ENCODE measurements at regions of chr19 and their contacts with region 1.

Region 1: DNA sequence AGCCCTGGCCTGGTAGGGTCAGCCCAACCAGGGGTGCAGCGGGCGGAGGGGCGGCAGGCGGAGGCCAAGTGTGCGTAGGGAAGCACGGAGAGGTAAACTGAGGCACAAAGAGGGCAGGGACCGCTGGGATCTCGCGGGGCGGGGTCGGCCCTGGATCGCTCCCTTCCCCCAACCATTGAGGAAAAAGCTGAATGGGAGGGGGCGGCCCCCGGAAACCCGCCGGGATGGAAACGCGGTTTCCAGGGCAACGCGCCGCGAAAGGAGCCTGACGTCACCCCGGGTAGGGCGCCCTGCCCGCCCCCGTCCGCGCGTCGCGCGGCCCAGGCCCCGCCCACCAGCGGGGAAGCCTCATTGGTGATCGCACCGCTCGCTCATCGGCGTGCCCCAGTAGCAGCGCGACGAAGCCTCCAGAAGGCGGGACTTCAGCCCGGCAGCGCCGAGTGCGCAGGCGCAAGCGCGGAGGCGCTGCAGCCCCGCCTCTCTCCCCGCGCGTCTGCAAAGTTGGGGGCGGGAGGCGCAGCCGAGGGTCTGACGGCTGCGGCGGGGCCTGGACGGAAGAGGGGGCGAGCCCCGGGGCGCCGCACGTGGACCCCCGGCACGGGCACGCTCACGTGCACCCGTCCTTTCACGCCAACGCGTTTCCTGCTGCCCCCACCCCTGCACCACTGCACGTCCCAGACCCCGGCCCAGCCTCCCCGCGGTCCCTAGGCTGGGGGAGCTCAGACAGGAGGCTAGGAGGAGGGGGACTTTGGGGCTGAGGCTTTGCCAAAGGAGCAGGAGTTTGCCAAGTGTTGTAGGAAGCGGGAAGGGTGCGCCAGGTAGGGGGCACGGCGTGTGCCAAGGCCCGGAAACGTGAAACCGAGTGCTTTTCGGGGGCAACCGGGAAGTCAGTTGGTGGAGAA is 8.2 kb upstream of the CIRBP start:
- DNase-seq: peak; percentile 96
- H3K4me3 Mint-ChIP-seq: peak overlapping the region; percentile 71
- H3K27ac Mint-ChIP-seq: peak overlapping the region; percentile 94
- H3K4me1 Mint-ChIP-seq: peaks cover 38% of the 10 kb centered on the region
- H3K27me3 Mint-ChIP-seq: no peaks in the 10 kb centered on the region
- CTCF ChIP-seq: no peak

Region 2: DNA sequence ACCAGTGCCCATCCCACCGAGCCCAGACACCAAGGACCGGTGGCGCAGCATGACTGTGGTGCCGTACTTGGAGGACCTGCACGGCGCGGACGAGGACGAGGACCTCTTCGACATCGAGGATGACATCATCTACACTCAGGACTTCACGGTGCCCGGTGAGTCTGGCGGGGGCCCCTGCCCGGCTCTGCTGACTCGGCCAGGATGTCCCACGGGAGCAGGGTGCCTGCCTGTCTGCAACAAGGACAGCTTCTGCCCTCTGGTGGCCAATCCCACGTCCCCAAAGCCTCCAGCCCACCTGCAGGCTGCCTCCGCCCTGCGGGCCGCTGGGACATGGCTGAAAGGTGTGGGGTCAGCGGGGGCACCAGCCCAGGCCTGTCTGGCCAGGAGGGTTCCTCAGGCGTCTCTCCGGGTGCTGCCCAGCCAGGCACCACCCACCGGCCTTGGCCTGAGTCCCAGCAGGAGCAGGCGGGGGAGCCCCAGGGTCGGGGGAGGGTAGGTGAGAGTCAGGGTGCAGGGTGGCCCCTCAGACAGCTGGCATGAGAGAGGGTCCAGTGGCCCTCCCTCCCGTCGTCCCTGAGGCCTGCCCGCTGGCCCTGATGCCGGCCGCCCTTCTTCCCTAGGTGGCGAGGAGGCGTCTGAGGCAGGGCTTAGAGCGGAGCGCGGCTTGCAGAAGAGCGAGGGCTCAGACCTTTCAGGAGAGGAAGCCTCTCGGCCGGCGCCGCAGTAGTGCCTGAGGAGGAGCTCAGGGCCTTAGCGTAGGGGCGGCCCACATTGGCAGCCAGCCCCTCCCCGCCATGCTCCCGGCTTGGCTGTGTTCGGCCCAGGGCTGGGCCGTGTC is 37.6 kb before region 1 on chr19:
- CTCF ChIA-PET with region 1: no interaction called
- POLR2A ChIA-PET with region 1: no interaction called
- intact Hi-C with region 1: no loop called
- DNase-seq: no peak
- H3K4me3 Mint-ChIP-seq: no peak overlapping the region
- H3K27ac Mint-ChIP-seq: no peak overlapping the region
- H3K4me1 Mint-ChIP-seq: no peaks in the 10 kb centered on the region
- H3K27me3 Mint-ChIP-seq: no peaks in the 10 kb centered on the region
- CTCF ChIP-seq: peak; percentile 39

Region 3: DNA sequence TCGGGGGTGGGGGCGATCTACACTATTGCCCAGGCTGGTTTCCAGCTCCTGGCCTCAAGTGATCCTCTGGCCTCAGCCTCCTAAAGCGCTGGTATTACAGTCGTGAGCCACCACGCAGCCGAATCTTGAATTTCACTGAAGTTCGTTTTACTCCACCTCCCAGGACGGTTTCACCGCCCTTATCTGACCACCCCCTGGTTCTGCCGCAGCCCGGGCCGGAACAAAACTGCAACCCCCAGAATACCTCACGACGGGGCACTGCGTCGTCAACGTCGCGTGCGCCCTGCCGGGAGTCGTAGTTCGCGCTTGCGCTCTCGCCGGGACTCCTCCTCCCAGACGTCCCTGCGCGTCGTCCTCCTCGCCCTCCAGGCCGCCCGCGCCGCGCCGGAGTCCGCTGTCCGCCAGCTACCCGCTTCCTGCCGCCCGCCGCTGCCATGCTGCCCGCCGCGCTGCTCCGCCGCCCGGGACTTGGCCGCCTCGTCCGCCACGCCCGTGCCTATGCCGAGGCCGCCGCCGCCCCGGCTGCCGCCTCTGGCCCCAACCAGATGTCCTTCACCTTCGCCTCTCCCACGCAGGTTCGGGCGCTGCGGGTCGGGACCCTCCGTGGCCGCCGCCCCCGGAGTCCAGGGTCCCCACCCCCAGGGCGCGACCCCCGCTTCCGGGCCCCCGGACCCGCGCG is 19.3 kb before region 1 on chr19 and contains the start of gene ATP5F1D:
- CTCF ChIA-PET with region 1: interaction called, 144 read pairs
- POLR2A ChIA-PET with region 1: interaction called, 240 read pairs
- intact Hi-C with region 1: loop called (anchors 1 kb)
- DNase-seq: peak; percentile 93
- H3K4me3 Mint-ChIP-seq: peak within 1 kb of the TSS; percentile 71
- H3K27ac Mint-ChIP-seq: peak within 1 kb of the TSS; percentile 75
- H3K4me1 Mint-ChIP-seq: peaks cover 10% of the 10 kb centered on the region
- H3K27me3 Mint-ChIP-seq: no peaks in the 10 kb centered on the region
- CTCF ChIP-seq: no peak
- total RNA-seq, gene ATP5F1D: 256 and 258 TPM in 2 replicates

Region 4: GRCh38 chr19:1249298-1249989 is 11.4 kb before region 1 on chr19:
- CTCF ChIA-PET with region 1: interaction called, 144 read pairs
- POLR2A ChIA-PET with region 1: interaction called, 240 read pairs
- intact Hi-C with region 1: loop called (anchors 1 kb)
- DNase-seq: peak; percentile 97
- H3K4me3 Mint-ChIP-seq: peak overlapping the region; percentile 86
- H3K27ac Mint-ChIP-seq: no peak overlapping the region
- H3K4me1 Mint-ChIP-seq: peaks cover 9% of the 10 kb centered on the region
- H3K27me3 Mint-ChIP-seq: no peaks in the 10 kb centered on the region
- CTCF ChIP-seq: no peak

Region 5: GRCh38 chr19:1336079-1336684 is 75.3 kb after region 1 on chr19:
- CTCF ChIA-PET with region 1: no interaction called
- POLR2A ChIA-PET with region 1: no interaction called
- intact Hi-C with region 1: no loop called
- DNase-seq: no peak
- H3K4me3 Mint-ChIP-seq: no peak overlapping the region
- H3K27ac Mint-ChIP-seq: no peak overlapping the region
- H3K4me1 Mint-ChIP-seq: no peaks in the 10 kb centered on the region
- H3K27me3 Mint-ChIP-seq: no peaks in the 10 kb centered on the region
- CTCF ChIP-seq: no peak

Measured in MCF 10A (cell line).